Activated CD4-positive, alpha-beta memory T cell treated with anti-CD3 and anti-CD28 coated beads, Interleukin-2, amount 10 ng/mL, durations not matched to agents 7 days and 5 days (primary cell): ENCODE measurements at regions of chr12 and their contacts with region 1.

Region 1: GRCh38 chr12:75390899-75391538 is at the start of gene GLIPR1L2:
- DNase-seq: peak; percentile 92
- H3K4me3 Mint-ChIP-seq: peak within 1 kb of the TSS; percentile 75
- H3K27ac Mint-ChIP-seq: peak within 1 kb of the TSS; percentile 83
- H3K4me1 Mint-ChIP-seq: peaks cover 39% of the 10 kb centered on the region
- H3K27me3 Mint-ChIP-seq: no peaks in the 10 kb centered on the region
- total RNA-seq, gene GLIPR1L2: 0.35 TPM in 1 of 2 experiments, not detected in the other

Region 2: GRCh38 chr12:75334384-75335030 is 56.5 kb before region 1 on chr12 and contains the start of gene GLIPR1L1:
- CTCF ChIA-PET with region 1: interaction called, 10 read pairs
- POLR2A ChIA-PET with region 1: interaction called, 4 read pairs
- DNase-seq: peak; percentile 83
- H3K4me3 Mint-ChIP-seq: peak within 1 kb of the TSS; percentile 59
- H3K27ac Mint-ChIP-seq: no peak within 1 kb of the TSS
- H3K4me1 Mint-ChIP-seq: peaks cover 33% of the 10 kb centered on the region
- H3K27me3 Mint-ChIP-seq: peaks cover 31% of the 10 kb centered on the region
- total RNA-seq, gene GLIPR1L1: not detected

Region 3: GRCh38 chr12:75378354-75378753 is 12.7 kb before region 1 on chr12:
- CTCF ChIA-PET with region 1: no interaction called
- POLR2A ChIA-PET with region 1: no interaction called
- DNase-seq: no peak
- H3K4me3 Mint-ChIP-seq: no peak overlapping the region
- H3K27ac Mint-ChIP-seq: no peak overlapping the region
- H3K4me1 Mint-ChIP-seq: no peaks in the 10 kb centered on the region
- H3K27me3 Mint-ChIP-seq: no peaks in the 10 kb centered on the region

Region 4: DNA sequence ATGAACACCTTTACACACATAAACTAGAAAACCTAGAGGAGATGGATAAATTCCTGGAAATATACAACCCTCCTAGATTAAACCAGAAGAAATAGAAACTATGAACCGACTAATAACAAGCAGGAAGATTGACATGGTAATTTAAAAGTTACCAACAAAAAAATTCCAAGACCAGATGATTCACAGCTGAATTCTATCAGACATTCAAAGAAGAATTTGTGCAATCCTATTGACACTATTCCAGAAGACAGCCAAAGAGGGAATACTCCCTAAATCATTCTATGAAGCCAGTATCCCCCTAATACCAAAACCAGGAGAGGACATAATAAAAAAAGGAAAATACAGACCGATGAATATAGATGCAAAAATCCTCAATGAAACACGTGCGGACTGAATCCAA is 223.0 kb after region 1 on chr12:
- CTCF ChIA-PET with region 1: no interaction called
- POLR2A ChIA-PET with region 1: no interaction called
- DNase-seq: no peak
- H3K4me3 Mint-ChIP-seq: no peak overlapping the region
- H3K27ac Mint-ChIP-seq: no peak overlapping the region
- H3K4me1 Mint-ChIP-seq: no peaks in the 10 kb centered on the region
- H3K27me3 Mint-ChIP-seq: peaks cover 51% of the 10 kb centered on the region